GM13977 (cell line): ENCODE measurements at regions of chr17 and their contacts with region 1.

Region 1: GRCh38 chr17:17675925-17676534 is 5.2 kb upstream of the RAI1 start:
- DNase-seq: no peak
- CTCF ChIP-seq: no peak

Region 2: GRCh38 chr17:17484451-17484899 is 191.6 kb before region 1 on chr17:
- in situ Hi-C with region 1: no loop called
- DNase-seq: no peak
- CTCF ChIP-seq: no peak

Region 3: GRCh38 chr17:17859909-17860765 is 184.1 kb after region 1 on chr17:
- in situ Hi-C with region 1: loop called (anchors 10 kb)
- DNase-seq: peak; percentile 82
- CTCF ChIP-seq: peak; percentile 99

Region 4: DNA sequence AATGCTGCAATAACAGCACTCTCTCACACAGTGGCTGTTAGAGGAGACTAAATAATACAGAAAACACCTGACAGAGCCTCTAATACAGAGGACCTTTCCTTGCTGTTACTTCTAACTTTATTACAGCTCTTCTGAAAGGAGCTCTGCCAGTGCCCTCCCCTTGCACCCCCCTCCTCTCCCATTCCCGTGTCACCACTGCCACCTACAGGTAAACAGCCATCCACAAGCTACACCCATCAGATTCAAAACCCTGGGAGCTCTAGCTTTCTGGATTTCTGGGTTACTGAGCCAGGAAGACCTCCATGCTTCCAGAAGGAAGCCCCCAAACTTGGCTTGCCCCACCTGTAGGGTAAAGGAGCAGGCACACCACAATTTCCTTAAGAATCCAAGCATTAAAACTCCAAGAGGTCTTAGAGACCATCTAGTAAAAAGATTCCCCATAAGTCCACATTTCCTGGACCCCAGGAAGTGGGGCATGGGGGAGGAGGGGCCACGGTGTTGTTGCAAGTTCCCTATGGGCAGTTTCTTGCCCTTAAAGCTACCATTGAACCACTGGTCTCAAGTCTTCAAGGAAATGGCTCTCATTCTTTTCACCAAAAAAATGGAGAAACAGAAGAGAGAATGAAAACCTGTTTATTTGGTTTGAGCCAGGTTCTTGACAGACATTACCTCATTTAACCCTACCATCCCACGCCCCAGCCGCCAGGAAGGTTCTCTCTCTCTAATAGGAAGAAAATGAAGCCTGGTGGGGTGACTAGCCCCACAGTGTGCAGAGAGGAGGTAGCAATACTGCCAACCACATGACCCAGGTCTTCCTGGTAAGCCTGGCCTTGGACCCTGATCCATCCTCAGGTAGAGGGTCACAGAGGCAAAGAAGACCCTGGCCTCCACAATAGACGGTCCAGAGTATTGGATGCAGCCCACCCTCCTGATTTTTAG is 243.4 kb after region 1 on chr17:
- in situ Hi-C with region 1: no loop called
- DNase-seq: peak; percentile 79
- CTCF ChIP-seq: peak; percentile 82

Region 5: GRCh38 chr17:18025945-18026776 is 350.1 kb after region 1 on chr17:
- in situ Hi-C with region 1: loop called (anchors 10 kb)
- DNase-seq: no peak
- CTCF ChIP-seq: no peak